IMR-90 (cell line): ENCODE measurements at regions of chr9 and their contacts with region 1.

Region 1: DNA sequence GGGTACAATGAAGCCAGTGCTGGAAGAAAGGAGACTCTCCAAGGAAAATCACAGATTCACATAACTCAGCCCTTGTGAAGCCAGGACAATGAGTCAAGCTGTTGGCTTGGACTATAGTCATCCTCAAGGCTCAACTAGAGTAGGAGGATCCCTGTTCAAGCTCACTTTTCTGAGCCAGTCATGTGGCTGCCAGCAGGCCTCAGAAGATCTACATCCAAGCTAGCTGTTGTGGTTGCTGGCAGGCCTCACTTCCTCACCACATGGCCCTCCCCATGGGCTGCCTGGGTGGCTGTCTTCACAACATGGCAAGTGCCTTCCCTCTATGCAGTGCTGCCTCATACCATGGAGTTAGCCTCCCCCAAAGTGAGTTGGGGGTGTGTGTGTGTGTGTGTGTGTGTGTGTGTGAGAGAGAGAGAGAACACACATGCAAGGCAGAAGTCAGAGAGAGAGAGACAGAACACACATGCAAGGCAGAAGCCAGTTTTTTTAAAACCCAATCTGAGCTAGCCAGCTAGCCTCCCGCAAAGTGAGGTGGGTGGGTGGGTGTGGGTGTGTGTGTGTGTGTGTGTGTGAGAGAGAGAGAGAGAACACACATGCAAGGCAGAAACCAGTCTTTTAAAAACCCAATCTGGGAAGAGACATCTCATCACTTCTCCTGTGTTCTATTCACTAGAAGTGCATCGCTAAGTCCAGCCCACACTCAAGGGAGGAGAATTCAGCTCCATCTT is 17.1 kb downstream of the SCAI start:
- DNase-seq: peak; percentile 100
- ATAC-seq: peak; percentile 98
- H3K4me3 ChIP-seq: no peak overlapping the region
- H3K27ac ChIP-seq: peak overlapping the region; percentile 30; the same call in 1 of the 2 replicates
- H3K4me1 ChIP-seq: peaks cover 8% of the 10 kb centered on the region
- H3K27me3 ChIP-seq: no peaks in the 10 kb centered on the region
- CTCF ChIP-seq: no peak
- POLR2A ChIP-seq: no peak
- RAD21 ChIP-seq: peak; percentile 20; the same call in 1 of the 2 replicates

Region 2: DNA sequence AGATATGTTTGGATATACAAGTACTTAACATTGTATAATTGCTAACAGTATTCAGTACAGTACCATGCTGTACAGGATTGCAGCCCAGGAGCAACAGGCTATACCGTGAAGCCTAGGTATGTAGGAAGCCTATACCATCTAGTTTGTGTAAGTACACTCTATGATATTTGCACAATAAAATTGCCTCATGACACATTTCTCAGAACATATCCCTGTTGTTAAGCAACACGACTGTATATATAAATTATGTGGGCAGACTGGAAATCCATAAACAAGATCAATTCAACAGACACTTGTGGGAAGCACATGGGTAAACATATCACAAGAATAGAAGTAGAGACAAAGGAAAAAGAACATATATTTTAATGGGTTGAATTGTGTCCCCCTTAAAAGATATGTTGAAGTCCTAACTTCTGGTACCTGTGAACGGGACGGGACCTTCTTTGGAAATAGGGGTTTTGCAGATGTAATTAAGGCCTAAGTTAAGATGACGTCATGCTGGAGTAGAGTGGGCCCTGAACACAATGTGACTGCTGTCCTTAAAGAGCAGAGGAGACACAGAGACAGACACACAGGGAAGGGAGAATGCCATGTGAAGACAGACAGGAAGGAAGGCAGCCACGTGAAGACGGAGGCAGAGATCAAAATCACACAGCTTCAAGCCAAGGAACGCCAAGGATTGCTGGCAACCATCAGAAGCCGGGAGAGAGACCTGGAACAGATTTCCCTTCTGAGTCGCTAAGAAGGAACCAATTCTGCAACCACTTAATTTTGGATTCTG is 59.2 kb before region 1 on chr9:
- CTCF ChIA-PET with region 1: no interaction called
- POLR2A ChIA-PET with region 1: no interaction called
- dilution Hi-C with region 1: no loop called
- in situ Hi-C with region 1: no loop called
- intact Hi-C with region 1: no loop called
- DNase-seq: peak; percentile 47
- ATAC-seq: peak; percentile 64
- H3K4me3 ChIP-seq: no peak overlapping the region
- H3K27ac ChIP-seq: peak overlapping the region; percentile 32; the same call in 1 of the 2 replicates
- H3K4me1 ChIP-seq: peaks cover 4% of the 10 kb centered on the region
- H3K27me3 ChIP-seq: no peaks in the 10 kb centered on the region
- CTCF ChIP-seq: no peak
- POLR2A ChIP-seq: no peak
- RAD21 ChIP-seq: no peak

Region 3: GRCh38 chr9:125137200-125137599 is 11.0 kb after region 1 on chr9:
- CTCF ChIA-PET with region 1: no interaction called
- POLR2A ChIA-PET with region 1: interaction called, 6 read pairs
- dilution Hi-C with region 1: no loop called
- in situ Hi-C with region 1: no loop called
- intact Hi-C with region 1: loop called (anchors 1 kb)
- DNase-seq: peak; percentile 96
- ATAC-seq: peak; percentile 85
- H3K4me3 ChIP-seq: no peak overlapping the region
- H3K27ac ChIP-seq: peak overlapping the region; percentile 51; the same call in 1 of the 2 replicates
- H3K4me1 ChIP-seq: peaks cover 9% of the 10 kb centered on the region
- H3K27me3 ChIP-seq: no peaks in the 10 kb centered on the region
- CTCF ChIP-seq: no peak
- POLR2A ChIP-seq: no peak
- RAD21 ChIP-seq: peak; percentile 20; the same call in 1 of the 2 replicates